ENCODE measurements at regions of chr12 and their contacts with region 1.

Region 1: GRCh38 chr12:12883369-12884001 is 7.9 kb upstream of the GPRC5A start:
- DNase-seq: peak; percentile 88 to 90
- H3K4me3 ChIP-seq: no peak overlapping the region
- H3K4me3 Mint-ChIP-seq: peak overlapping the region; percentile 70
- H3K27ac Mint-ChIP-seq: peak overlapping the region; percentile 88
- H3K4me1 ChIP-seq: peaks cover 61% of the 10 kb centered on the region
- H3K4me1 Mint-ChIP-seq: peaks cover 80% of the 10 kb centered on the region
- H3K27me3 ChIP-seq: no peaks in the 10 kb centered on the region
- H3K27me3 Mint-ChIP-seq: no peaks in the 10 kb centered on the region
- CTCF ChIP-seq: no peak

Region 2: GRCh38 chr12:12562585-12563261 is 320.8 kb before region 1 on chr12 and contains the start of gene DUSP16:
- CTCF ChIA-PET with region 1: no interaction called
- POLR2A ChIA-PET with region 1: no interaction called
- intact Hi-C with region 1: no loop called
- DNase-seq: peak; percentile 97 to 99
- H3K4me3 ChIP-seq: peak within 1 kb of the TSS; percentile 78
- H3K4me3 Mint-ChIP-seq: peak within 1 kb of the TSS; percentile 79
- H3K27ac Mint-ChIP-seq: peak within 1 kb of the TSS; percentile 86
- H3K4me1 ChIP-seq: peaks cover 30% of the 10 kb centered on the region
- H3K4me1 Mint-ChIP-seq: peaks cover 27% of the 10 kb centered on the region
- H3K27me3 ChIP-seq: no peaks in the 10 kb centered on the region
- H3K27me3 Mint-ChIP-seq: no peaks in the 10 kb centered on the region
- CTCF ChIP-seq: peak; percentile 29 to 34
- total RNA-seq, gene DUSP16: 63.9 and 76.8 TPM in 2 replicates

Region 3: DNA sequence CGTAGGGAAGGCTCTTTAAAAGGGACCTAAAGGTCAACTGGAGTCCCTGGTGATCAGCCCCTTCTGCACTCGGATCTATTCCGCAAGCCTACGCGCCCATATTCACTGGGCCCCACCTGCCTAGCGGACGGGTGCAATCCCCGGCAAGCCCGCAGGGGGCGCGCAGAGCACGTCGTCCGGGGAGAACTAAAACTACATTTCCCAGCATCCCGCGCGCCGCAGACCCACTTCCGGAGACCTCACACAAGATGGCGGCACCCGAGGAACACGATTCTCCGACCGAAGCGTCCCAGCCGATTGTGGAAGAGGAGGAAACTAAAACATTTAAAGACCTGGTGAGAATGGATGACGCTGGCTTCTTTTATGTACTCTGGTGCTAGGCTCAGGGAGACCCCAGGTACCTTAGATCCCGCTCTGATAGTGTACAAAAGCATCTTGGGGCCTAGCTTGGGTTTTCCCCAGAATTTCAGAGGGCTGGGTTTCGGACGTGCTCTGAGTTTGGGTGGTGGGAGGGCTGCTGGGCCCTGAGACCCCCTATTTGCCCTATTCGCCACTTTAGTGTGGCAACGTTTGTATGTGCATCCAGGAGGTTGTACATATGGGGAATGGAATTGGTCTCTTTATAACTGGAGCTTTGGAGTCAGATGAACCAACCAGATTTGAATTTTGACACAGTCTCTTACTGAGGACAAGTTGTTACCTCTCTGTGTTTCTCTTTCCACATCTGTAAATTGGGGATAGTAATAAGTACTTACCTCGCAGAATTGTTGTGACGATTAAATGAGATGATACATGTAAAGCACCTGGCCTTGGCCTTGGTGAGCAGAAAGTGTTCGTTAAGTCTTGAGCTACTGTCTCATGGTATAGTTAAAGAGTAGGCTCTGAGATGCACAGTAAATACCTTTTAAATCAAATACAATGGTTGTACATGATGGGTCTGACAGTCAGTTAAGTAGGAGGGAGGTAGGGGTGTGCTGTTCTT is 70.1 kb before region 1 on chr12 and contains the start of gene DDX47:
- CTCF ChIA-PET with region 1: interaction called, 8 read pairs
- POLR2A ChIA-PET with region 1: no interaction called
- intact Hi-C with region 1: loop called (anchors 1 kb)
- DNase-seq: peak; percentile 97 to 99
- H3K4me3 ChIP-seq: peak within 1 kb of the TSS; percentile 78
- H3K4me3 Mint-ChIP-seq: peak within 1 kb of the TSS; percentile 96
- H3K27ac Mint-ChIP-seq: peak within 1 kb of the TSS; percentile 95
- H3K4me1 ChIP-seq: peaks cover 52% of the 10 kb centered on the region
- H3K4me1 Mint-ChIP-seq: peaks cover 39% of the 10 kb centered on the region
- H3K27me3 ChIP-seq: no peaks in the 10 kb centered on the region
- H3K27me3 Mint-ChIP-seq: no peaks in the 10 kb centered on the region
- CTCF ChIP-seq: peak; percentile 99
- total RNA-seq, gene DDX47: 121 and 138 TPM in 2 replicates

Region 4: DNA sequence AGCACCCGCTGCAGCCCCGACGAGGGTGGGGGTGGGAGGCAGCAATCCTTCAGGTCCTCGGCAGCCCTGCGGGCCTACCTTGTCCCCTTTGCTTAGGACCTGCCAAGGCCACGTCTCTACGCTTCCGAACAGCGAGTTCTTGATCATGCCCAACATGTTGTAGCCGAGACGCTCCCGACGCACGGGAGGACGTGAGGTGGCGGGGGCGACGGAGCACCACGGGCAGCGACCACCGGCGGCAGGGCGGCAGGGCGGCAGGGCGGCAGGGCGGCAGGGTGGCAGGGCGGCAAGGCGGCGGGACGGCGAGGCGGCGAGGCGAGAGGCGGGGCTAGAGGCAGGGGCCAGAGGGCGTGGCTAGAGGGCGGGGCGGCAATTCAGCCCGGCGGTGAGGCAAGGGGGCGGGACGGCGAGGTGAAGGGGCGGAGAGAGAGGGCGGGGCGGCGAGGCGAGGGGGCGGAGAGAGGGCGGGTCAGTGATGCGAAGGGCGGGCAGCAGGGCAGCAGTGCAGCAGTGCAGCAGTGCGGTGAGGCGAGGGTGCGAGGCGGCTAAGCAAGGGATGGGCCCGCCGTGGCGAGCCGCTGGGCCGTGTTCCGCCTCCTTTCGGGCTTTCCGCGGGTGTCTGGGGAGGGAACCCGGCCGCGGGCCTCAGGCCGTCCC is 116.6 kb after region 1 on chr12 and contains the start of gene HEBP1:
- CTCF ChIA-PET with region 1: no interaction called
- POLR2A ChIA-PET with region 1: no interaction called
- intact Hi-C with region 1: no loop called
- DNase-seq: peak; percentile 97 to 99
- H3K4me3 ChIP-seq: peak within 1 kb of the TSS; percentile 85
- H3K4me3 Mint-ChIP-seq: peak within 1 kb of the TSS; percentile 88
- H3K27ac Mint-ChIP-seq: peak within 1 kb of the TSS; percentile 94
- H3K4me1 ChIP-seq: peaks cover 25% of the 10 kb centered on the region
- H3K4me1 Mint-ChIP-seq: peaks cover 25% of the 10 kb centered on the region
- H3K27me3 ChIP-seq: no peaks in the 10 kb centered on the region
- H3K27me3 Mint-ChIP-seq: no peaks in the 10 kb centered on the region
- CTCF ChIP-seq: no peak
- total RNA-seq, gene HEBP1: 55.2 and 55.8 TPM in 2 replicates